ENCODE measurements at regions of chr3 and their contacts with region 1.

Region 1: GRCh38 chr3:32502118-32502945 is at the start of gene CMTM6:
- DNase-seq: peak; percentile 53 to 92 (median 82)

Region 2: GRCh38 chr3:32570421-32571191 is 68.3 kb after region 1 on chr3 and contains the start of gene DYNC1LI1:
- intact Hi-C with region 1: loop called (anchors 5 kb)
- DNase-seq: peak; percentile 82 to 98 (median 94)

Measured in head of caudate nucleus (tissue), 42 donors.